Activated CD8-positive, alpha-beta memory T cell treated with anti-CD3 and anti-CD28 coated beads, Interleukin-2, amount 10 ng/mL, durations not matched to agents 7 days and 5 days (primary cell): ENCODE measurements at regions of chr1 and their contacts with region 1.

Region 1: GRCh38 chr1:156001682-156002171 is 19.0 kb downstream of the SSR2 start:
- DNase-seq: no peak
- ATAC-seq: no peak
- H3K4me3 Mint-ChIP-seq: no peak overlapping the region
- H3K27ac Mint-ChIP-seq: no peak overlapping the region
- H3K4me1 Mint-ChIP-seq: peaks cover 15% of the 10 kb centered on the region
- H3K27me3 Mint-ChIP-seq: no peaks in the 10 kb centered on the region

Region 2: DNA sequence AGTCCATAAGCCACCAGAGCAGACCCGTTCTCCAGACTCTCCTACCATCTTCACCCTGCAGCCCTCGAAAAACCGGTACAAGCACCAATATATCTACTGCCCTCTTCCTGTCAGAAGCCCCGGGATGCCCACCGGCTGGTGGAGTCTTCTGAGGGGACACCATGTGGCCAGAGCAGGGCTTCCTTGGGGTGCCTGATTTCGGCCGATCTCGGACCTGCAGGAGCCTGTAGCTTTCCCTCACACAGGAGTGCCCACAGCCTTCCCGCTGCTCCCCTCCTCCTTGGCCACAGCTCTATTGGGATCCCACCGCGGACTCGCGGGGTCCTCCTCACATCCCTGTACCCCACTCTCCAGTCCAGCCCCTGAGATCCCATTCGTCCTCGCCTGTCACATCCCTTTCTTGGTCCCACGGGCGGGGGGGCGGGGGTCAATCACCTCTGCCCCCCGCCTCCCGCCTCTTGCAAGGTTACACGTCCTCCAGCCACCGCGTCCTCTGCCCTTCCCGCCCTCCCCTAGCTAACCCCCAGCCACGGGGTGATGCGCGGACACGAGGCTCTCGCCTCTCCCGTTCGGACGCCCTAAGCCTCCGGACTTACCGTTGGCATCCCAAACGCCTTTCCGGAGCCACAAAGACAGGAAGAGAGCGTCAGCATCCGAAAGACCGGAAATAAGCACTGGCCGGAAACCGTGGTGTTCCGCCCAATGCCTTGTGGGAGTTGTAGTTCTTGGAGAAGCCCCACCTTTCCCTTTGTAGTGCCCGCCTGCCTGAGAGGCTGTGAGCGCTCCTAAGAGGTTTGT is 18.8 kb after region 1 on chr1 and contains the start of gene SSR2:
- CTCF ChIA-PET with region 1: interaction called, 12 read pairs
- DNase-seq: peak; percentile 94
- ATAC-seq: peak; percentile 99
- H3K4me3 Mint-ChIP-seq: peak within 1 kb of the TSS; percentile 92
- H3K27ac Mint-ChIP-seq: peak within 1 kb of the TSS; percentile 94
- H3K4me1 Mint-ChIP-seq: peaks cover 37% of the 10 kb centered on the region
- H3K27me3 Mint-ChIP-seq: peaks cover 4% of the 10 kb centered on the region
- total RNA-seq, gene SSR2: 185 to 200 TPM

Region 3: GRCh38 chr1:156076501-156077429 is 75.0 kb after region 1 on chr1:
- CTCF ChIA-PET with region 1: no interaction called
- DNase-seq: no peak
- ATAC-seq: no peak
- H3K4me3 Mint-ChIP-seq: no peak overlapping the region
- H3K27ac Mint-ChIP-seq: no peak overlapping the region
- H3K4me1 Mint-ChIP-seq: no peaks in the 10 kb centered on the region
- H3K27me3 Mint-ChIP-seq: peaks cover 45% of the 10 kb centered on the region